Heart left ventricle (tissue), 16 donors: ENCODE measurements at regions of chr7 and their contacts with region 1.

Region 1: DNA sequence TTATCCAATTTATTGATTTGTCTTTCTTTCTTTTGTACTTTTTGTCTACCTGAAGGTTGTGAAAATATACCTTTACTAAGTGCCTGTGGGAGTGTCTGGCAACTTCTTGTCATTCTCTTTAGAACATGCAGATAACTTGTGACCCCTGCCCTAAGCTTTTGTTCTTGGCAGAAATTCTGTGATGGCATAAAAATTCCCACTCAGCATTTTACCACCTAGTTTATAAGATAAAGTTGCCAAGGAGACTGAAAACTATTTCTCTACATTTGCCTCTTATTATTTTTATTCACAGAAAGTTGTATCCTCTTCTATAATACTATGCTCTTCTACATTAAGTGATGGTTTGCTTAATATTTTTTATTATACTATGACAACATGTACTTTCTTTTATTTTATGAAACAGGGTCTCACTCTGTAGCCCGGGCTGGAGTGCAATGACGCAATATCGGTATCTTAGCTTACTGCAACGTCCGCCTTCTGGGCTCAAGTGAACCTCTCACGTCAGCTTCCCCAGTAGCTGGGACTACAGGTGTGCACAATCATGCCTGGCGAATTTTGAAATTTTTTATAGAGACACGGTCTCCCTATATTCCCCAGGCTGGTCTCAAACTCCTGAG is 683.5 kb downstream of the ANKRD7 start:
- DNase-seq: no peak
- ATAC-seq: no peak
- H3K4me3 ChIP-seq: no peak overlapping the region
- H3K27ac ChIP-seq: no peak overlapping the region
- H3K4me1 ChIP-seq: no peaks in the 10 kb centered on the region
- H3K27me3 ChIP-seq: no peaks in the 10 kb centered on the region
- CTCF ChIP-seq: no peak
- POLR2A ChIP-seq: no peak

Region 2: DNA sequence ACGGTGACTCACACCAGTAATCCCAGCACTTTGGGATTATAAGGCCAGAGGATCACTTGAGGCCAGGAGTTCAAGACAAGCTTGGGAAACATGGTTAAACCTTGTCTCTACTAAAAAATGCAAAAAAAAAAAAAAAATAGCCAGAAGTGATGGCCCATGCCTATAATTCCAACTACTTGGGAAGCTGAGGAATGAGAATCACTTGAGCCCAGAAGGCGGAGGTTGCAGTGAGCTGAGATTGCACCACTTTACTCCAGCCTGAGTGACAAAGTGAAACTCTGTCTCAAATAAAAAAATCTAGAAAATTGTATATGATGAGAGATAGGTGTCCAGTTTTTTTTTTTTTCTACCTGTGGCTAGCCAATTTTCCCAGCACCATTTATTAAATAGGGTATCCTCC is 105.3 kb before region 1 on chr7:
- intact Hi-C with region 1: no loop called
- DNase-seq: no peak
- ATAC-seq: no peak
- H3K4me3 ChIP-seq: no peak overlapping the region
- H3K27ac ChIP-seq: no peak overlapping the region
- H3K4me1 ChIP-seq: no peaks in the 10 kb centered on the region
- H3K27me3 ChIP-seq: no peaks in the 10 kb centered on the region
- CTCF ChIP-seq: no peak
- POLR2A ChIP-seq: no peak

Region 3: GRCh38 chr7:118858651-118859149 is 49.3 kb before region 1 on chr7:
- intact Hi-C with region 1: loop called in 1 of 10 experiments (anchors 5 kb)
- DNase-seq: peak in 1 of 5 donors; percentile 53
- ATAC-seq: peak in 1 of 4 donors; percentile 27
- H3K4me3 ChIP-seq: no peak overlapping the region
- H3K27ac ChIP-seq: no peak overlapping the region
- H3K4me1 ChIP-seq: no peaks in the 10 kb centered on the region
- H3K27me3 ChIP-seq: no peaks in the 10 kb centered on the region
- CTCF ChIP-seq: no peak
- POLR2A ChIP-seq: no peak